ENCODE measurements at regions of chr13 and their contacts with region 1.

Region 1: GRCh38 chr13:114065141-114065925 is 67.1 kb downstream of the RASA3 start:
- DNase-seq: peak; percentile 39 to 77 (median 62)
- ATAC-seq: peak; percentile 70 to 74
- H3K4me3 Mint-ChIP-seq: peak overlapping the region; percentile 84 to 93 (median 86)
- H3K27ac Mint-ChIP-seq: peak overlapping the region; percentile 91 to 99 (median 96)
- H3K4me1 Mint-ChIP-seq: peaks cover 36 to 70% (median 67%) of the 10 kb centered on the region in 4 donors
- H3K27me3 Mint-ChIP-seq: no peaks in the 10 kb centered on the region

Region 2: GRCh38 chr13:113672002-113672651 is 393.2 kb before region 1 on chr13:
- POLR2A ChIA-PET with region 1: no interaction called
- DNase-seq: peak in 1 of 10 donors; percentile 62
- ATAC-seq: no peak
- H3K4me3 Mint-ChIP-seq: peak overlapping the region in 3 of 10 donors; percentile 3 to 59 (median 11)
- H3K27ac Mint-ChIP-seq: peak overlapping the region in 8 of 10 donors; percentile 5 to 74 (median 16)
- H3K4me1 Mint-ChIP-seq: peaks cover 0 to 16% (median 5%) of the 10 kb centered on the region in 4 donors
- H3K27me3 Mint-ChIP-seq: peaks cover 0 to 2% (median 0%) of the 10 kb centered on the region in 5 donors

Region 3: GRCh38 chr13:113997845-113998668 is 67.3 kb before region 1 on chr13:
- POLR2A ChIA-PET with region 1: no interaction called
- DNase-seq: peak in 1 of 10 donors; percentile 42
- ATAC-seq: no peak
- H3K4me3 Mint-ChIP-seq: peak overlapping the region in 3 of 10 donors; percentile 33 to 63 (median 51)
- H3K27ac Mint-ChIP-seq: peak overlapping the region in 6 of 10 donors; percentile 20 to 79 (median 48)
- H3K4me1 Mint-ChIP-seq: peaks cover 0 to 6% (median 2%) of the 10 kb centered on the region in 4 donors
- H3K27me3 Mint-ChIP-seq: no peaks in the 10 kb centered on the region

Region 4: GRCh38 chr13:114050536-114051450 is 14.5 kb before region 1 on chr13:
- POLR2A ChIA-PET with region 1: interaction called, 10 read pairs
- DNase-seq: no peak
- ATAC-seq: no peak
- H3K4me3 Mint-ChIP-seq: peak overlapping the region in 3 of 10 donors; percentile 22 to 67 (median 42)
- H3K27ac Mint-ChIP-seq: peak overlapping the region in 7 of 10 donors; percentile 2 to 65 (median 29)
- H3K4me1 Mint-ChIP-seq: peaks cover 25 to 79% (median 68%) of the 10 kb centered on the region in 4 donors
- H3K27me3 Mint-ChIP-seq: peaks cover 0 to 1% (median 0%) of the 10 kb centered on the region in 5 donors